ENCODE measurements at regions of chr22 and their contacts with region 1.

Region 1: DNA sequence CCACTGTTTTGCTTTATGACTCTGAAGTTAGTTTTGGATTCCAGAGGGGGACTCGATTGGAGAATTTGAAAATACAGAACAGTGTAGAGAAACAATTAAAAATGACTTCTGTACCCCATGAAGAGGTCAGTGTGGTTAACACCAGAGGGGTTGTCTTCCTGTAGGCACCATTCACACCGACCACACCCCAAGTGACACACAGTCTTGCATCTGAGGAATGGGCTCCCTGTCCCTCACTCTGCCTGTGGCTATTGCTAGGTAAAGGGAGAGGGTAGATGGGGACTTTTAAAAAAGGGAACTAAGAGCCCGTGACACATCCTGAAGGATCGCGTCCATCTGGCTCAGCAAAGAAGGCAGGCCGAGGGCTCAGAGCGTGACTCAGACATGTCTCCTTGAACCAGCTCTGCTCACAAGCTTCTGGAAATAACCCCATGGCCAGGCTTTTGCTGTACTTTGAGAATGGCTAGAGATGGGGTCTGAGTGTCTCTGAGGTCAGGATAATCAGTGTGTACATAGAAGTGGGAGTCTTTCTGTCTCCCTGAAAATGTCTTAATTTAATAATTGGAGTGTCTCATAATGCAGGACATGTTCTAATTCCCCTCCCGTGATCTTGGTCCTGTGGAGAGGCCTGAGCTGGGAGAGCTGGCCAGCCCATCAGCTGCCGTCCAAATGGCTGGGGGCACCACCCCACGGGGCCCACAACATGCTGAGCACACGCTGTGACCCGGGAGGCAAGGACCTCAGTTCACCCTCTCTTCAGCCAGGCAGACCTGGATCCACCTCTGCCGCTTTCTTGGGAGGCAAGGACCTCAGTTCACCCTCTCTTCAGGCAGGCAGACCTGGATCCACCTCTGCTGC is 39.3 kb downstream of the SGSM1 start:
- DNase-seq: no peak
- H3K4me3 Mint-ChIP-seq: no peak overlapping the region
- H3K27ac Mint-ChIP-seq: no peak overlapping the region
- H3K4me1 Mint-ChIP-seq: peaks cover 2% of the 10 kb centered on the region
- H3K27me3 Mint-ChIP-seq: peaks cover 4% of the 10 kb centered on the region

Region 2: DNA sequence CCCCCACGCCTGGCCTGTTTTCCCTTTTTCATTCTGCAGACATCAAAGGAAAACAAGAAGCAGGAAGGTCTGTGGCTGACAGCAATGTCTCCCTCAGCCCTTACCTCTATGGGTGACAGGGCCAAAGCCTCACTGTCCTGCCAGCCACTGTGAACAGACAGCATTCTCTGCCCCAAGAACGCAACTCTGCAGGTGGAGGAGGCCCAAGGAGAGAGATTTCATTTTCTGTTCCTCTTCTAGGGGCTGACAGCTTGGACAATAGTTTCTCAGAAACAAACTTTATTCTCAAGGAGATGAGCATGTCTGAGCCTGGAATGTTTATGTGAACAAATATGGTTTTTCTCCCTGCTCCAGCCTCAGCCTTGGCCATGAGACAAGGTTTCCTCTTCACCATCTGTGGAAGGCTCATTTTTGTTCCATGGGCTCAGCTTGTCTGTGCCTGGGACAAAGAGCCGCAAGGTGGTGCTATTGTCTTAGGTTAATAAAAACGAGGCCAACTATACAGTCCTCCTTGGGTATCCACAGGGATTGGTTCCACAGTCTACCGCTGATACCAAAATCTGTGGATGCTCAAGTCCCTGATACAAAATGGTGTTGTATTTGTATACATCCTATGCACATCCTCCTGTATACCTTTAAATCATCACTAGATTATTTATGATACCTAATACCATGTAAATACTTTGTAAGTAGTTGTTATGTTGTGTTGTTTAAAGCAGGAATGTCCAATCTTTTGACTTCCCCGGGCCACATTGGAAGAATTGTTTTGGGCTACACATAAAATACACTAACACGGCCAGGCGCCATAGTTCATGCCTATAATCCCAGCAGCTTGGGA is 76.5 kb before region 1 on chr22:
- intact Hi-C with region 1: loop called (anchors 5 kb)
- DNase-seq: no peak
- H3K4me3 Mint-ChIP-seq: no peak overlapping the region
- H3K27ac Mint-ChIP-seq: no peak overlapping the region
- H3K4me1 Mint-ChIP-seq: peaks cover 3% of the 10 kb centered on the region
- H3K27me3 Mint-ChIP-seq: peaks cover 5% of the 10 kb centered on the region

Measured in activated T-helper 2 cell treated with anti-CD3 and anti-CD28 coated beads, Interferon-gamma antibody, Interleukin-2, Interleukin-4, amounts not matched to agents 10 μg/mL and 5 μg/mL and 100 μg/mL, durations not matched to agents 14 hours and 24 hours and 36 hours (primary cell).